ENCODE measurements at regions of chr3 and their contacts with region 1.

Region 1: DNA sequence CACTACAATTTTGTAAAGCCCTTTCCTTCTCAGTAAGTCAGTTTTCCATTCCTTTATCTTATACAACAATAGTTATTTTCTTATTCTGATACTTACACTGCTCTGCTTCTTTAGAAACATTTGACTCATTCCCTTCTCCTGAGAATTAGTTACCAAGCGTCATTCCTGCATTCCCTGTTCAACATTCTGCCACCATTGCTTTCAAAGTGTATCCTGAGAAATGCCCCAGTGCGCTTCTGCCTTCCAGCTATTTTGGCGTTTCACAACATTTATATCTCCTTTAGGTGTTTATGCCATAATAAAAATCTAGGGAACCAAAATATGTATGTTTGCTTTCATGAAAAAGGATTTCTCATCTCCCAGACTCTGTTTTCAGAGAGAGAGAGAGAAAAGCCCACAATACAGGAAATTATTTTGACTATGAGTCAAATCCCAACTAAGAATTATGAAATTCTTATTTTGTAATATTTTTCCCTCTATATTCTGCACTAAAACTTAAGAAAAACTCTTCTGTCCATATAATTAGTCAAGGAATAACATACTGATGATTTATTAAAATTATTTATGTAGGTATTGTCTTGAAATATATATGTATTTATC is 118.2 kb upstream of the RAP2B start:
- DNase-seq: no peak
- H3K4me3 ChIP-seq: no peak overlapping the region
- H3K27ac ChIP-seq: no peak overlapping the region
- H3K4me1 ChIP-seq: no peaks in the 10 kb centered on the region
- H3K27me3 ChIP-seq: no peaks in the 10 kb centered on the region
- CTCF ChIP-seq: no peak
- EP300 ChIP-seq: no peak
- POLR2A ChIP-seq: no peak
- RAD21 ChIP-seq: no peak

Region 2: GRCh38 chr3:152957543-152957942 is 86.3 kb before region 1 on chr3:
- CTCF ChIA-PET with region 1: no interaction called
- POLR2A ChIA-PET with region 1: no interaction called
- DNase-seq: no peak
- H3K4me3 ChIP-seq: no peak overlapping the region
- H3K27ac ChIP-seq: no peak overlapping the region
- H3K4me1 ChIP-seq: no peaks in the 10 kb centered on the region
- H3K27me3 ChIP-seq: no peaks in the 10 kb centered on the region
- CTCF ChIP-seq: no peak
- EP300 ChIP-seq: no peak
- POLR2A ChIP-seq: no peak
- RAD21 ChIP-seq: no peak

Region 3: DNA sequence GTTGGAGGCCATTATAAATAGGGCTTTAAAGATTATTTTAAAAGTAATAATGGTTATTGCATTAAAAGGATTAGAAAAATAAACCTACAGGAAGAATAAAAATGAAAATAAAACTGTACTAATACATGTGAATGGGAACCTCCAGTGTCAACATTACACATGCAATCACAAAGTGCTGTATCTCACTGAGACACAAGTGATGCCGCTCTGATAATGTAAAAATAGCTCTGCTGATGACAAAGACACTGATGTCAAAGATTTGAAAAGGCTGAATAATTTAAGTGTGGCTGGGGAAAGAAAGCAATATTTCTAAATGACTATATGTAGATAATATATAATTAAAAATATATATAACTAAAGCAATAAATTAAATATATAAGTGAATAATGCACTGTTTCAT is 10.9 kb before region 1 on chr3:
- CTCF ChIA-PET with region 1: interaction called, 11 read pairs
- POLR2A ChIA-PET with region 1: no interaction called
- DNase-seq: no peak
- H3K4me3 ChIP-seq: no peak overlapping the region
- H3K27ac ChIP-seq: no peak overlapping the region
- H3K4me1 ChIP-seq: no peaks in the 10 kb centered on the region
- H3K27me3 ChIP-seq: no peaks in the 10 kb centered on the region
- CTCF ChIP-seq: no peak
- EP300 ChIP-seq: no peak
- POLR2A ChIP-seq: no peak
- RAD21 ChIP-seq: no peak

Measured in H1 (cell line).